Activated T-helper 1 cell treated with anti-CD3 and anti-CD28 coated beads, Interleukin-12 subunit alpha, Interleukin-12 subunit beta, Interleukin-2, Interleukin-4 antibody, amounts not matched to agents 30 ng/mL and 10 ng/mL and 1 ng/mL, durations not matched to agents 14 hours and 24 hours and 36 hours (primary cell): ENCODE measurements at regions of chr10 and their contacts with region 1.

Region 1: DNA sequence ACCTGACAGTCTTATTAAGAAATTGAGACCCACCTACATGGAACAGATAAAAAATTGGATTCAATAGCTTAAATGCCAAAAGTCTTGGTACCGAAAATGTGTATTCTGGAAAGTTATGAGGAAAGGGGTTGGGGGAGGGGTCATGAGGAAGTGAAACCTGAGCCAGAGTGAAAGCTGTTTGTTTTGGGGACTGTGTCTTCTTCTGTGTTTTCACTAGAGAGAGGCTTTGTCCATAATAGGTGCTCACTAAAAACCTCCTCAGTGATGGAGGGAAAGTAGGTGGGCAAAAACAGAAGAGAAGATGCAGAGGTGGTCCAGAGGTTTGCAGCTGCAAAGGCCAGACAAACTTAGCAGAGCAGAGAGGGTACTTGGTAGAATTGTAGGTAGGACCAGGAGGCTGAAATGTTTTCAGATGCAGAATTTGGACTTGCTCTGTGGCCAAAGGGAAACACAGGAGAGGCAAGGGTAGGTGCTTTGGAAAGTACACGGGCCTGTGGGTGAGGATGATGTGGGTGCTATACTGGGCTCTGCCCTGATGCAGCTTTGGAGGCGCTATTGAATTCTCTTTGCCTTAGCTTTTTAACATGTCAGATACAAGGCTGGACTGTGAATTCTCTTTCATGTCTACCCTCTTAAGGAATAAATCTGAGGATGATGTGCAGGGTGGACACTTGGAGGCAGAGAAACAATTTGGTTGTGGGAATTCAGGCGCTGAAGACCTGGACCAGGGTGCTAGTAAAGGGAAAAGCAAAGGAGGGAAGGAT is 254.6 kb downstream of the PTEN start:
- DNase-seq: no peak
- H3K4me3 Mint-ChIP-seq: no peak overlapping the region
- H3K27ac Mint-ChIP-seq: no peak overlapping the region
- H3K4me1 Mint-ChIP-seq: peaks cover 18% of the 10 kb centered on the region
- H3K27me3 Mint-ChIP-seq: peaks cover 3% of the 10 kb centered on the region

Region 2: GRCh38 chr10:87878664-87879459 is 239.2 kb before region 1 on chr10:
- intact Hi-C with region 1: no loop called
- DNase-seq: no peak
- H3K4me3 Mint-ChIP-seq: no peak overlapping the region
- H3K27ac Mint-ChIP-seq: peak overlapping the region; percentile 35
- H3K4me1 Mint-ChIP-seq: peaks cover 23% of the 10 kb centered on the region
- H3K27me3 Mint-ChIP-seq: no peaks in the 10 kb centered on the region

Region 3: GRCh38 chr10:88064608-88065382 is 53.3 kb before region 1 on chr10:
- intact Hi-C with region 1: loop called (anchors 1 kb)
- DNase-seq: peak; percentile 11
- H3K4me3 Mint-ChIP-seq: no peak overlapping the region
- H3K27ac Mint-ChIP-seq: peak overlapping the region; percentile 66
- H3K4me1 Mint-ChIP-seq: peaks cover 60% of the 10 kb centered on the region
- H3K27me3 Mint-ChIP-seq: no peaks in the 10 kb centered on the region

Region 4: GRCh38 chr10:88138319-88138848 is 20.3 kb after region 1 on chr10:
- intact Hi-C with region 1: loop called (anchors 1 kb)
- DNase-seq: no peak
- H3K4me3 Mint-ChIP-seq: peak overlapping the region; percentile 59
- H3K27ac Mint-ChIP-seq: peak overlapping the region; percentile 76
- H3K4me1 Mint-ChIP-seq: peaks cover 29% of the 10 kb centered on the region
- H3K27me3 Mint-ChIP-seq: peaks cover 8% of the 10 kb centered on the region

Region 5: DNA sequence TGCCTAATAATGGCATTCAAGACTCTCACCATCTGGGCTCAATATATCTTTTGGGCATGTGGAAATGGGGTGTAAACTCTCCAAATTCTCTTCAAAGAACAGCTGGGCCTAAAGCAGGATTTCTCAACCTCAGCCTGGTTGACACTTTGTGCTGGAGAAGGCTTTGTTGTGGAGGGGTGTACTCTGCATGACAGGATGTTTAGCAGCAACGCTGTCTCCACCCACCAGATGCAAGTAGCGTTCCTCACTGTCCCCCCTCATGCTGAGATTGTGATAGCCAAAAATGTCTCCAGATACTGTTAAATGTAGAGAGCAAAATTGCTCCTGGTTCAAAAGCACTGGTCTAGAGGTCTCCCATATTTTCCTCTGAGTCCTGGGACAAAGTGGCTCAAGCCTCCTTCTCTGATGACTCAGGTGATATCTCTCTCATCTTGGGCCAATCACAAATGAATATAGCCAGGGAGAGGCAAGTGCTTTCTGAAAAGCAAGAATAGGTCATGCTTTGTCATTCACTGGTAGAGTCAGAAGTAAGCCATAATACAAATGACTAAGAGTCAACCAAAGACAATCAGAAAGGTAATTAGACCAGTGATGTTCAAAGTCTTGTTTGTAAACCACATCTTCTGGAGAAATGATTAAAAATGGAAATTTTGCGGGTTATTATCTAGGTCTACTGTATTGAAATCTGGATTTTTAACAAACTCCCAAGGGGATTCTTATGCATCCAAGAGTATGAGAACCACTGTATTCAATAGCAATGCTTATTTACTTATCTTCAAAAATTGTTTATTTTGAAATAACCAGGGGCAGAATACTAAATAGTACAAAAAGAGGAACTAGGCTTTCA is 76.2 kb after region 1 on chr10:
- intact Hi-C with region 1: loop called (anchors 1 kb)
- DNase-seq: peak; percentile 47
- H3K4me3 Mint-ChIP-seq: peak overlapping the region; percentile 43
- H3K27ac Mint-ChIP-seq: peak overlapping the region; percentile 90
- H3K4me1 Mint-ChIP-seq: peaks cover 35% of the 10 kb centered on the region
- H3K27me3 Mint-ChIP-seq: peaks cover 3% of the 10 kb centered on the region

Region 6: DNA sequence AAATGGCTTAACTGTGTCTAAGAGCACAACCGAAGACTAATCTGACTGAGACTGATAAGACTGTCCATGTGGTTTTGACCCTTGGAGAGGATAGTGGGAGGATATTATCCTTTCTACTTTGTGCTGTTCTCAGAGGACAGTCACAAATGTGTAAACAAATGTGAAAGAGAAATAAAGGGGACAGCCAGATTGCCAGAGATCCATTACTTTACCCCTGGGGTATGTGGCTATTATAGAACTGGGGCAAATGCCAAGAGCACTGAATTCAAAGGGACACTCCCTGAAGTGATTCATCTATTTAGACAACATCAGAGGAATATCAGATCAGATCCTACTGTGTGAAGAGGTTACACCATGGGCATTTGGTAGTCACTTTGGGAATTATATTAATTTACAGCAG is 310.4 kb after region 1 on chr10:
- intact Hi-C with region 1: no loop called
- DNase-seq: no peak
- H3K4me3 Mint-ChIP-seq: no peak overlapping the region
- H3K27ac Mint-ChIP-seq: no peak overlapping the region
- H3K4me1 Mint-ChIP-seq: peaks cover 4% of the 10 kb centered on the region
- H3K27me3 Mint-ChIP-seq: peaks cover 25% of the 10 kb centered on the region

Region 7: GRCh38 chr10:88553116-88553752 is 435.2 kb after region 1 on chr10:
- intact Hi-C with region 1: loop called (anchors 2 kb)
- DNase-seq: peak; percentile 14
- H3K4me3 Mint-ChIP-seq: no peak overlapping the region
- H3K27ac Mint-ChIP-seq: no peak overlapping the region
- H3K4me1 Mint-ChIP-seq: peaks cover 6% of the 10 kb centered on the region
- H3K27me3 Mint-ChIP-seq: peaks cover 3% of the 10 kb centered on the region

Region 8: GRCh38 chr10:89535171-89536012 is 1417.3 kb after region 1 on chr10 and contains the start of gene SLC16A12:
- intact Hi-C with region 1: no loop called
- DNase-seq: no peak
- H3K4me3 Mint-ChIP-seq: no peak within 1 kb of the TSS
- H3K27ac Mint-ChIP-seq: no peak within 1 kb of the TSS
- H3K4me1 Mint-ChIP-seq: peaks cover 5% of the 10 kb centered on the region
- H3K27me3 Mint-ChIP-seq: peaks cover 60% of the 10 kb centered on the region
- total RNA-seq, gene SLC16A12: not detected in 2 replicates